ENCODE measurements at regions of chr19 and their contacts with region 1.

Region 1: DNA sequence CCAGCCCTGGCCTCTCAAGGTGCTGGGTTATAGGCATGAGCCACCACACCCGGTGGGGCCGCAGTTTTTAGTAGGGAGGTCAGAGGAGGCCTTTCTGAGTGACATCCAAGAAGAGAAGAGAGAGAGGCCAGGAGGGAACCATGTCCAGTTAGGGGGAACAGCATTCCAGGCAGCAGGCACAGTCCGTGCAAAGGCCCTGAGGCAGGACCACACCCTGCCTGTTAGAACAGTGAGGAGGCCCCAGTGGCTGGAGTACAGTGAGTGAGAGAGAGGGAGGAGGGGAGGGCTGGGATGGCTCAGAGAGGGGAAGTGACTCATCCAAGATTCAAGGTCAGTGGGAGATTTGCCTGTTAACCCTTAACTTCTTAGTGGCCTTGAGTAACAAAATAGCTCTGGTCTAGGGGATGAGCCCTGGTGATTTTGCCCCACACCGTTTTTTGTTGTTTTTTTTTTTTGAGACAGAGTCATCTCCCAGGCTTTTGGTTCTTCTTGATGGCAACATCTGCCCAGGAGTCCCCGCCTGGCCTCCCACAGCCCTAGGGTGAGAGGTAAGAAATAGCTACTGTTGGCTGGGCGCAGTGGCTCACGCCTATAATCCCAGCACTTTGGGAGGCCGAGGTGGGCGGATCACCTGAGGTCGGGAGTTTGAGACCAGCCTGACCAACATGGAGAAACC is 2.7 kb upstream of the PLIN3 start:
- DNase-seq: peak; percentile 64
- ATAC-seq: no peak

Region 2: DNA sequence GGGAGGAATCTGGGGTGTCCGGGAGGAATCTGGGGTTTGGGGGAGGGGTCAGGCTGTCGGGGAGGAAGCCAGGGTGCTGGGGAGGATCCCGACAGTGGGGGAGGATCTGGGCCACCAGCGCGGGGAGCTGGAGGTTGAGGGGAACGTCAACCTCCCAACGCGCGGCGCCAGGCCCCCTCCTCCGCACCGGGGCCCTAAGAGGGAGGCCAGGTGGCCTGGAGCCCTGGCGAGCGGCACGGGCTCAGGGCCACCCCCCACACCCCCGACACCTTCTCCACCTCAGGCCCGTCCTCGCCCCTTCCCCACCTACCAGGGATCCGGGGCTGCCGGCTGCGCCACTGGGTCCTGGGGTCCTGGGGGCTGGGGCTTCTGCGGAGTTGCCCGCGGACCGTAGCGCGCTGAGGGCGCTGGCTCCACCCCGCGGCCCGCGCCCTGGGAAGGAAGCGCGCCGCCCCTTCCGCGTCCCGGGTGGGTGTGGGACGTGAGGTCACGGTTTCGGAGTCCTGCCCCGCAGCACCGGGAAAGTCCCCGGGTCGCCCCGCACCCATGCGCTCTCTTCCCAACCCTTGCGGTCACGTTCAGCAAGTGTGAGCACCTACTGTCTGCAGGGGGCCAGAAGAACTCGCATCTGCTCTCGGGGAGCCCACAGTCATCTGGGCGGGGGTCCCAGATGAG is 38.7 kb before region 1 on chr19 and contains the start of gene TICAM1:
- intact Hi-C with region 1: no loop called
- DNase-seq: peak; percentile 89
- ATAC-seq: peak; percentile 98
- total RNA-seq, gene TICAM1: 7.4 TPM

Region 3: DNA sequence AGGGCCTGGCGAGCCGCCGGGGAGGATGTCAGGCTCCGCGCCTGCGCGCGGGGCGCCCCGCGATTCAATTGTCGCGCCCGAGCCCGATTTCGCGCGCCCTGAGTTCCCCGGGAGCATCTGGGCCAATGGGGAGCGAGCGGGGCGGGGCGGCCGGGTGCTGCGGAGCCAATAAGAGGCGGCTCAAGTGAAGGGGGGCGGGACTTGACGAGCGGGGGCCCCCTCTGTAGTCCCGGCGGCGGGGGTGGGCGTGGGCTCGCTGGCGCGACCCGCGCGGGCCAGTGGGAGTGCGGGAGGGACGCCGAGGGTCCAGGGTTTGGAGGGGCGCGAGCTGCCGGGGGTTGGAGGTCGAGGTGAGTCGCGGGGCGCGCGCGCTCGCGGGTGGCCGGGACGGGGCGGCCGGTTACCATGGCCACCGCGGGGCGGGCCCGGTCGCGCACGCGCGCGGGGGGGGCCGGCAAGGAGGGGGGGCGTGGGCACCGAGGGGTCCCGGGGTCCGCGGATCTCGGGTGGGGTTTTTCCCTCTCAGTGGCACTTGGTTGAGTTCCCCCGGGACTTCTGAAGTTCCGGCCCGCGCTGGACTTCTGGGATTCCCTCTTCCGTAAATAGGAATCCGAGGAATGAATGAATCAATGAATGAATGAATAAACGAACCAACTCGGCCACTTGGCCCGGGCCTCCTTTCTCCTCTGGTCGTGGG is 39.9 kb after region 1 on chr19:
- intact Hi-C with region 1: loop called (anchors 5 kb)
- DNase-seq: peak; percentile 97
- ATAC-seq: peak; percentile 98

Region 4: GRCh38 chr19:4922530-4923275 is 52.5 kb after region 1 on chr19:
- intact Hi-C with region 1: no loop called
- DNase-seq: no peak
- ATAC-seq: no peak

Region 5: DNA sequence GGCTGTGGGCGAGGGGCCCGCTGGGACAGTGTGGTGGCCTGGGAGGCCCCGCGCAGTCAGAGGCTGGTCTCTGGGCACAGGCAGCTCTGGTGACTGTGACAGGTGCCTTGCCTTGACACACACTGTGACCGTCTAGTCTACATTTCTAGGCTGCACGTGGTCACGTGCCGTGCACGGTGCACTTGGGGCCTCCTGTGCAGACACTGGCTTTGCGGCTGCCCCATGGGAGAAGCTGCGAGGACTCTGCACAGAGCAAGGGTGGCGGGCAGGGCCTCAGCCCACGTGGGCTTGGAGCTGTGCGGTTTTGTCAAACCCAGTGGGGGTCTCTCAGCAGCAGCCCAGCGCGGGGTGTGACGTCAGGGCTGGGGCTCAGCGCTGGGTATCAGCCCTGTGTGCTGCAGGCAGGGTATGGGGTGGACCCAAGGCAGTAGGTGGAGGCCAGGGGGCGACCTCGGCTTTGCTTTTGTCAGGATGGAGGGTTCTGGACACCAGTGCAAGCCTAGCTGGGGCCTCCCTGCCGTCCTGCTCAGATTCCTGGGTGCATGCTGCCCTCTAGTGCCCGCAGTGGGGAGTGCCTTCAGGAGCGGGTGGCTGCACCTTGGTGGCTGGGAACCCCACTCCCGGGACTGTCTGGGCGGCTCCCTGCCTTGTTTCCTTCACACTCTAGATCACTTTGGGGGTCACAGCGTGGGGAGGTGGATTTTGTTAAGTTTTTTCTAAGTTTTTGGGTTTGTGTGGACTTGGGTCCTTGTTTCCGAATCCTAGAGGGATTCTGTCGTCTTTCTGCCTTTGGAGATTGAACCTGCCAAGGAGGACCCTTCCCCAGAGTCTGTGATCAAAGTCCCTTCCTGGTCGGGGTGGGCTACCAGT is 161.3 kb after region 1 on chr19:
- intact Hi-C with region 1: loop called (anchors 5 kb)
- DNase-seq: peak; percentile 90
- ATAC-seq: peak; percentile 88

Measured in Right ventricle myocardium superior (tissue), 1 donor.